ENCODE measurements at regions of chr1 and their contacts with region 1.

Region 1: GRCh38 chr1:215863796-215864195 is 296.7 kb downstream of the KCTD3 start:
- DNase-seq: no peak
- H3K27ac ChIP-seq: no peak overlapping the region
- CTCF ChIP-seq: no peak

Region 2: DNA sequence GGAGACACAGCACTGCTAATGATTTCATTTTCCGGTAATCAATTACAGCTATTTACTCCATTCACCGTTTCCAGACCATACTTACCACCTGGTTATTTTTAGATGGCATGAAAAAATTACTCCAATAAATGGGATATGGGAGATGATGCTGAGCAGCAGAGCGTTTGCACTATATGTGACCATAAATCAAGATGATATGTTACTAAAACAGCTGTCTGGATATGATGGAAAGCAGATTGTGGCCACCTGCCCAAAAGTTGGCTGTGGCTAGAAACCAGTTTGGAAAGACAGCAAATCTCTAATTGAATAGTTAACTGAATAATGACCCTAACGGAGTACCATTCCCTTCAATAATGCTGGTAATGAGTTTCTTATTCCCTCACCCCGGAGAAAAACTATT is 319.2 kb before region 1 on chr1:
- CTCF ChIA-PET with region 1: no interaction called
- POLR2A ChIA-PET with region 1: no interaction called
- DNase-seq: no peak
- H3K27ac ChIP-seq: no peak overlapping the region
- CTCF ChIP-seq: no peak

Region 3: DNA sequence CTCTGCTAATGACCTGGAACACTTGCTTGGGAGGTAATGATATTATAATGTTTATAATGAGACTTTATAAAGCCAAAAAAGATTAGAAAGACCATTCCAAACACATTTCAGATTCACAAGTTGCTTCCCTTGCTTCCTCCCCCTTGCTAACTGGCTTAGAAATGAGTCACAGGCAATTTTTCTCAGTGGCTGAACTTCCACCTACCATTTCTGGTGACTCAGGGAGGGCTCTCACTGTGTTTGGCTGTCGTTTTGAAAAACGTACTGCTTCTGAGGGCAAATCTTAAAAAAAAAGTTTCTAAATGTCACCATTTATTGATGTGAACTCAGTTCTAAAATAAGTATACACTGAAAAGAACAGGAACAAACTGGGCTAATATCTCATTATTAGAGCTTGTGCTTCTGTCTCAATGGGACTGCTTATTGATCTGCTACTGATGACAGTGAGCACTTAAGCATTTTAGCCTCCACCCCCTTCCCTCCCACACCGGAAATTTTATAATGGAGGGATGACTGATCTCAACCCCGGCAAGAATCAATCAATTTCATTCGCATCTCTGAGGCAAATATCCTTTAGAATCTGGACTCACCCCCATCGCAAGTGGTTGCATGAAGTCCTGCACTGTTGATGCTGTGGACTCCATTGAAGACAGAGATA is 18.4 kb before region 1 on chr1:
- CTCF ChIA-PET with region 1: no interaction called
- POLR2A ChIA-PET with region 1: interaction called, 12 read pairs
- DNase-seq: no peak
- H3K27ac ChIP-seq: no peak overlapping the region
- CTCF ChIP-seq: no peak

Region 4: GRCh38 chr1:216090556-216090955 is 226.8 kb after region 1 on chr1:
- CTCF ChIA-PET with region 1: no interaction called
- POLR2A ChIA-PET with region 1: no interaction called
- DNase-seq: no peak
- H3K27ac ChIP-seq: no peak overlapping the region
- CTCF ChIP-seq: no peak

Measured in RWPE1 (cell line).